Esophagus muscularis mucosa (tissue), 4 donors: ENCODE measurements at regions of chr4 and their contacts with region 1.

Region 1: DNA sequence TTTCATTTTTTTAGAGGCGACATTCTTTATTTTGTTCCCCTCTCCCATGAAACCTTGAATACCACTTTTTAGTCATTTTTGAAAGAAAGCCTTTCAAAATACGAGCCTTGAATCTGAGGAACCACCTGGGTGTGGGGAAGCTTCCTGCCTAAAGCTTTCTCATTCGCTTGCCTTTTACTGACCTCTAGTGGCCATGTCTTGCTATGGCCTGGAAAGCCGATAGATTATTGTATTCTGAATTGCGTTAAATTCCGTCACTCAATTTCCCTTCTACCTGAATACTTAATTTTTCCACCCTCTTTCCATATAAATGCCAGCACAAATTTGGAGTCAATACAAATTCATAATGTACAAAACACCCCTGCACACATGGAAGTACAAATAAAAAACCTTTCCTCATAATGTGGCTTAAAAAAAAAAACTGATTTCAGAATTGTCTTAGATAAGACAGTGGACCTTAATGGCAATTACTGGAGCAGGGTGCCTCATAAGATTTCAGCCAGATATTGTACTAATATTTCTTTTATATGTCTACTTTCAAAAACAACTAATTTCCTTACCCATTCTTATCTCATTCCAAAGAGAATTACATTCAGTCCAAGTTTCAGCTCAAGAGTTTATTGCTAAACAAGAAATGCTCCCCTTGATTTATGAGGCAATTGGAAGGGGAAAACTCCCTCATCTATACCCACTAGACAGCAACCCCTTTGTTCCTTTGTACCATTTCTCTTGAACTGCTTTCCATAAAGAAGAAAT is 217.9 kb downstream of the CENPC start:
- DNase-seq: no peak
- H3K4me3 ChIP-seq: no peak overlapping the region
- H3K27ac ChIP-seq: no peak overlapping the region
- H3K4me1 ChIP-seq: peaks cover 0 to 4% (median 0%) of the 10 kb centered on the region in 4 donors
- H3K27me3 ChIP-seq: peaks cover 0 to 11% (median 0%) of the 10 kb centered on the region in 4 donors
- CTCF ChIP-seq: peak; percentile 75 to 94 (median 83)
- EP300 ChIP-seq: no peak
- POLR2A ChIP-seq: no peak

Region 2: GRCh38 chr4:67087897-67088296 is 239.5 kb before region 1 on chr4:
- intact Hi-C with region 1: loop called (anchors 5 kb)
- DNase-seq: no peak
- H3K4me3 ChIP-seq: no peak overlapping the region
- H3K27ac ChIP-seq: no peak overlapping the region
- H3K4me1 ChIP-seq: no peaks in the 10 kb centered on the region
- H3K27me3 ChIP-seq: no peaks in the 10 kb centered on the region
- CTCF ChIP-seq: peak; percentile 12 to 36 (median 28)
- EP300 ChIP-seq: no peak
- POLR2A ChIP-seq: no peak

Region 3: DNA sequence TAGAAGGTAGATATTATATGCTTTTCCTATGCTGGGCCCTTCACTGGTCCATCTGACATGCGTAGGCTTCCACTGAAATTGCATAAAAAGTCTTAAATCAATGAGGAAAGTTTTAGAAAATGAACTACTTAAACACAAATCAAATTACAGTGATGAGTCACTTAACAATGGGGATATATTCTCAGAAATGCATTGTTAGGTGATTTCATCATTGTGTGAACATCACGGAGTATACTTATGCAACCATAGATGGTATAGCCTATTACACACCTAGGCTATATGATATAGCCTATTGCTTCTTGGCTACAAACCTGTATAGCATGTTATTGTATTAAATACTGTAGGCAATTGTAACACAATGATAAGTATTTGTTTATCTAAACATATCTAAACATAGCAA is 241.4 kb after region 1 on chr4:
- intact Hi-C with region 1: no loop called
- DNase-seq: no peak
- H3K4me3 ChIP-seq: no peak overlapping the region
- H3K27ac ChIP-seq: no peak overlapping the region
- H3K4me1 ChIP-seq: no peaks in the 10 kb centered on the region
- H3K27me3 ChIP-seq: no peaks in the 10 kb centered on the region
- CTCF ChIP-seq: no peak
- EP300 ChIP-seq: no peak
- POLR2A ChIP-seq: no peak